Sigmoid colon (tissue), 7 donors: ENCODE measurements at regions of chr20 and their contacts with region 1.

Region 1: DNA sequence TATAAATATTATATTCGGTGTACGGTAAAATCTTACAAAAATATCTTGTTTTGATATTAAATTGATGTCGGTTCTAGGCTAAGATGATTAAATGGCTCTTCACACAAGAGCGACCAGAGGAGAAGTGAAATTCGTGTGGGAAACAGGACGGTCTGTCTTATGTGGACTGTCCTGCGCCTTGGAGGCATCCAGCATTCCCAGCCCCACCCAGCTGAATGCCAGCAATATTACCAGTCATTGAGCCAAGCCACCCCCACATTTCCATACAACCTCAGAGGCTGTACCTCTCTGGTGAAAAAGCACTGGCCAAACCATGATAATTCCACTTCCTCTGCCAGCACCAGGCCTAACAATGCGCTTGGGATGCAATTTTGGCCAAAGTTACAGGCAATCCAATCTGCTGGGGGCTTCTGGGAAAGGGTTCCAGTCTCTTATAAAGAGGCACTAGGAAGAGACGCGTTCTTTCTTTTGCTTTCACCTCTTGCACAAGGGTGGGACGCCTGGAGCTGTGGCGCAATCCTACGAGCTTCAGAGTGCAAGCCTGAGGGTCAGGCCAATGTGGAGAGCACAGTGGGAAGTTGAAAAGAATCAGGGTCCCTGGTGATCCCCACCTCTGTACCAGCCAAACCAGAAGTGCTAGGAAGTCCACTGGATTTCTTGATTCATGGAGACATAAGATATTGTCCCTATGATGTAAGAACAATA is 213.1 kb downstream of the PREX1 start:
- DNase-seq: peak; percentile 24
- H3K4me3 ChIP-seq: no peak overlapping the region
- H3K27ac ChIP-seq: no peak overlapping the region
- H3K4me1 ChIP-seq: peaks cover 0 to 5% (median 5%) of the 10 kb centered on the region in 4 donors
- H3K27me3 ChIP-seq: no peaks in the 10 kb centered on the region
- CTCF ChIP-seq: no peak
- EP300 ChIP-seq: no peak
- POLR2A ChIP-seq: no peak

Region 2: GRCh38 chr20:47974234-47975088 is 640.3 kb before region 1 on chr20:
- intact Hi-C with region 1: loop called (anchors 5 kb)
- DNase-seq: no peak
- H3K4me3 ChIP-seq: no peak overlapping the region
- H3K27ac ChIP-seq: peak overlapping the region in 1 of 4 donors; percentile 56
- H3K4me1 ChIP-seq: peaks cover 0 to 22% (median 7%) of the 10 kb centered on the region in 4 donors
- H3K27me3 ChIP-seq: no peaks in the 10 kb centered on the region
- CTCF ChIP-seq: no peak
- EP300 ChIP-seq: no peak
- POLR2A ChIP-seq: no peak

Region 3: GRCh38 chr20:48556956-48557355 is 57.8 kb before region 1 on chr20:
- intact Hi-C with region 1: no loop called
- DNase-seq: no peak
- H3K4me3 ChIP-seq: no peak overlapping the region
- H3K27ac ChIP-seq: no peak overlapping the region
- H3K4me1 ChIP-seq: no peaks in the 10 kb centered on the region
- H3K27me3 ChIP-seq: no peaks in the 10 kb centered on the region
- CTCF ChIP-seq: no peak
- EP300 ChIP-seq: no peak
- POLR2A ChIP-seq: no peak